ENCODE measurements at regions of chr6 and their contacts with region 1.

Region 1: DNA sequence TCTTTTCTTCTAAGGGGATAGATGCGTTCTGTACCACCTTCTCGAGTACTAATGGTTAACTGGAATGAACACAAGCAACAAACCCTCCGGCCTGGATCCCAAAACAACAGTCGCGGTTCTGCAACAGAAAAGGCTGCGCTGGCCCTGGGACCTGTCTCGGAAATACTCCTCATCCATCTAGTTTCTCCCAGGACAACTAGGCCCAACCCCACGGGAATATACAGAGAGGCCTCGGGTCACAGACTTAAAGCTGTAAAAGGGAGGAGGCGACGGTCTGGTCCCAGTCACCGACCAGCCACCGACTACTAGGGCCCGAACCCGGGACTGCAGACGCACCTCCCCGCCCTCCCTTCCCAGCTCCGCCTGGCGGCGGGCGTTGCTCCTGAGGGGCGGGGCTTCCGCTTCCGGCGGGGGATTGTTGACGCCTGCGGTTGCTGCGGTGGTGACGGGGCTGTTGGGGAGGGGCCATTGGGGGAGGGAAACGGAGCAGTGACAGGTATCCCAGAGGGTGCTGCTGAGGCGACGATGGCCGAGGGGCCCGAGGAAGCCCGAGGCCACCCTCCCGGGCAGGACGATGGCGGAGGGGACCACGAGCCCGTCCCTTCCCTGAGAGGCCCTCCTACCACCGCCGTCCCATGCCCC is at the start of gene FAM8A1:
- DNase-seq: peak; percentile 95

Region 2: GRCh38 chr6:17565399-17565798 is 34.6 kb before region 1 on chr6:
- CTCF ChIA-PET with region 1: no interaction called
- POLR2A ChIA-PET with region 1: no interaction called
- DNase-seq: no peak

Region 3: DNA sequence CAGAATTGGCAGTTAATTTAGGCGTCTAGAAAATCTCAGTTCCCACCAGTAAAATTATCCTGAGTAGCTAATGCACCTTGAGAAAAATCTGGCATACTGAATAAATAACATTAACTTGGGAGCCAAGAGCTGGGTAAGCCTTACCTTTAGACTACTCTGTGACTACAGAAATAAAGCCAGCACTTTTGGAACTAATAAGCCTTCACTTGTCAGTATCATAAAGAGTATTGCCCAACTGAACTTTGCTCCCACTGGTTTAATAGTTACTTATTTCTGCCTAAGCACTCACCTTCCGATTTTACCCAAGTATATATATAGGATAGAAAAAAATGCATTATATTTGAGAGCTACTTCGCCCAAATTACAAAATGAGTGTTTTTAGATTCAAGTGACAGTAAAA is 10.8 kb after region 1 on chr6:
- CTCF ChIA-PET with region 1: no interaction called
- POLR2A ChIA-PET with region 1: interaction called, 14 read pairs
- DNase-seq: no peak

Region 4: GRCh38 chr6:17706580-17707370 is 106.8 kb after region 1 on chr6 and contains the start of gene NUP153:
- CTCF ChIA-PET with region 1: interaction called, 4 read pairs
- POLR2A ChIA-PET with region 1: interaction called, 10 read pairs
- DNase-seq: peak; percentile 97